ENCODE measurements at regions of chr18 and their contacts with region 1.

Region 1: DNA sequence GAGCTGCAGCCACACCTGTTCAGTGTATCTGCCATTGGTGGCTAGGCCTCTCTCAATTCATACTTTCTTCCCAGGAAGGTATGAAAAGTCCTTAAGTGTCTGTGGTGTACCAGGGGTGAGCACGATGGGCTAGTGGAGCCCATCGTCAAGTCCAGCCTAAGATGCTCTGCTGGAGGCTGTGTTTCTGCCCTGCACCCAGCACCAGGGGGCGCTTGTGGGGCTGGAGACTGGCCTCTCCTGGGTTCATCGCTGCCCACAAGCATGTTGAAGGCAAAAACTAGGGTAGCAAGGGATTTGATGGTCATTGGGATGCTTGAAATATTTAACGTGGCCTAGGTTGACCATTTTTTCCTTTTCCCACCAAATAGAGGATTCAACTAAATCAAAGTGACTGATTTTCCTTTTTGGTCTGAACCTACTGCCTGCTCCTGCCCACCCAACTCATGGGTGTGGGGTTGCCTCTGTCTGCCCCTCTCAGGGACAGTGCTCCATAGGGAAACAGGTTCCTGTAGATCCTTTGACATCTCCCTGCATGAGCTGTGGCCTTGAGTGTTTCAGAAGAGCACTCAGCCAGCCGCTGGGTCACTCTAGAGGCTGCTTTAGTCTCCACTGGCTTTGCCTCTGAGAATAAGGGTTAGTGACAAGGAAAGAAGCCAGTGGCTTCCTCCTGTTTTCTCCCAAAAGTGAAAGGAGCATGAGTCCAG is 59.0 kb downstream of the TPGS2 start:
- DNase-seq: peak; percentile 10
- ATAC-seq: peak; percentile 92
- H3K4me3 ChIP-seq: no peak overlapping the region
- H3K27ac ChIP-seq: no peak overlapping the region
- H3K4me1 ChIP-seq: no peaks in the 10 kb centered on the region
- H3K27me3 ChIP-seq: 0 out of 5 replicates have a peak, but pooled peaks cover 0 to 14% of the 10 kb centered on the region in 2 experiments
- CTCF ChIP-seq: peak; percentile 69
- EP300 ChIP-seq: no peak
- POLR2A ChIP-seq: no peak
- RAD21 ChIP-seq: 0 out of 2 replicates have a peak, but pooled peaks have one; percentile 30

Region 2: GRCh38 chr18:36752929-36753865 is 16.6 kb before region 1 on chr18:
- CTCF ChIA-PET with region 1: no interaction called
- POLR2A ChIA-PET with region 1: no interaction called
- in situ Hi-C with region 1: no loop called
- intact Hi-C with region 1: no loop called
- DNase-seq: no peak
- ATAC-seq: no peak
- H3K4me3 ChIP-seq: no peak overlapping the region
- H3K27ac ChIP-seq: no peak overlapping the region
- H3K4me1 ChIP-seq: no peaks in the 10 kb centered on the region
- H3K27me3 ChIP-seq: no peaks in the 10 kb centered on the region; a peak in 1 of 5 replicates
- CTCF ChIP-seq: no peak
- EP300 ChIP-seq: no peak
- POLR2A ChIP-seq: no peak
- RAD21 ChIP-seq: no peak

Region 3: GRCh38 chr18:36809590-36810381 is 40.0 kb after region 1 on chr18:
- CTCF ChIA-PET with region 1: interaction called, 12 read pairs
- POLR2A ChIA-PET with region 1: no interaction called
- in situ Hi-C with region 1: no loop called
- intact Hi-C with region 1: loop called (anchors 1 kb)
- DNase-seq: peak; percentile 56
- ATAC-seq: peak; percentile 94
- H3K4me3 ChIP-seq: no peak overlapping the region
- H3K27ac ChIP-seq: no peak overlapping the region
- H3K4me1 ChIP-seq: no peaks in the 10 kb centered on the region
- H3K27me3 ChIP-seq: no peaks in the 10 kb centered on the region
- CTCF ChIP-seq: peak; percentile 86
- EP300 ChIP-seq: no peak
- POLR2A ChIP-seq: no peak
- RAD21 ChIP-seq: no peak

Region 4: DNA sequence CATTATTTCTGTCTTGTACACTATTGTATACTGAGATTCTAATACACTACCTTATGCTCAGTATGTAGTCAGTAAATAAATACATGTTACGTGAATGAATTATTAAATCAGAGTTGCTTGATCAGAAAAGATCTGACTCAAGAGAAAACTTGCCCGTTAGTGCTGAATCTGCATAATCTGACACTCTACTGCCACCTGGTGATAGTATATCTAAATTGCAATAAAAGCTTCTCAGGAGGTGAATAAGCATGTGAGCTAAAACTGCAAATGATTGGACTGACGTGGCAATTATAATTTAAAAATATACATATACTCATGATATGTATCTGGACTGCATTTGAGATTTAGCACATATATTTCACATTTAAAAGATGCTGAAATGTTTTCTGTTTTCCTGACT is 129.5 kb after region 1 on chr18:
- CTCF ChIA-PET with region 1: interaction called, 3 read pairs
- POLR2A ChIA-PET with region 1: no interaction called
- in situ Hi-C with region 1: no loop called
- intact Hi-C with region 1: loop called (anchors 1 kb)
- DNase-seq: peak; percentile 31
- ATAC-seq: no peak
- H3K4me3 ChIP-seq: no peak overlapping the region
- H3K27ac ChIP-seq: no peak overlapping the region
- H3K4me1 ChIP-seq: no peaks in the 10 kb centered on the region
- H3K27me3 ChIP-seq: no peaks in the 10 kb centered on the region
- CTCF ChIP-seq: peak; percentile 40; the same call in 1 of the 2 replicates
- EP300 ChIP-seq: no peak
- POLR2A ChIP-seq: no peak
- RAD21 ChIP-seq: no peak